ENCODE measurements at regions of chr1 and their contacts with region 1.

Region 1: DNA sequence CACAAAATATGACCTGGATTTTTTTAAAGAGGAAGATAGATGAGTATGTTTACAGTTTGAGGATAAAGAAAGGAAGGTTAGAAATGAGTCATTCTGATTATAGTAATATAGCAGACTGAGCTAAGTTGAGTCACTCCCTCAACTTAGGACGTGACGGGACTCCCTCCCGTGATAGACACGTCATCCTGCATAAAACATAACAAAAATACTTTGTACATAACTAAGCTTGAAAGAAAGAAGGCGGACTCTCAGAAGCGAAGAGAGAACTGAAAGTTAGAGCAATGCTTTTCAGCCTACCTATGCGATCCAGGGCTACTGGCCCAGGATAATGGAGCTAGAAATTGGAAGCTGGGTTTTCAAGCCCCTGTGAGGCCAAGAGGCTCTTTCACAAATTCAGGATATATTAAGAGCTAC is 53.0 kb upstream of the DESI2 start:
- DNase-seq: peak; percentile 96
- H3K4me3 ChIP-seq: peak overlapping the region in 2 of 3 experiments; percentile 12 to 63
- H3K27ac ChIP-seq: peak overlapping the region; percentile 92
- H3K4me1 ChIP-seq: peaks cover 15% of the 10 kb centered on the region
- H3K27me3 ChIP-seq: peaks cover 0 to 2% of the 10 kb centered on the region in 2 experiments
- CTCF ChIP-seq: no peak
- POLR2A ChIP-seq: no peak

Region 2: DNA sequence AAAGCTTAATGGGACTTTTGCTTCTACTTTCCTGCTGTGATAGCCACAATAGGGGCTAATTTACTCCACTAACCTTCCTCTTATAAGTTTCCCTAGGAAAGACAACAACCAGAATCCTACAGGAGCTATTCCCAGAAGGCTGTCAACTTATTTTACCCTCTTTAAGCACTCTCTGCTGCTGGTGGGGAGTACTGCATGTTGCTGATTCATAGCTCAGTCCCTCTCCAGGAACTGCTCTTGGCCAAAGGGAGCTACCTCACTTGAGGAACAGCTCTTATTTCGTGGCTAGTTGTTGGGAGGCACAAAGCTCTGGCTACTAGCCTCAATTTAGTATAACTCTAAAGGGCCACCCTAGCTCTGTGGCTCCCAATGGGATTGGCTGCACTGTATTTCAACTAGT is 185.4 kb before region 1 on chr1:
- CTCF ChIA-PET with region 1: no interaction called
- POLR2A ChIA-PET with region 1: no interaction called
- dilution Hi-C with region 1: no loop called
- intact Hi-C with region 1: no loop called
- DNase-seq: peak; percentile 64
- H3K4me3 ChIP-seq: no peak overlapping the region
- H3K27ac ChIP-seq: no peak overlapping the region
- H3K4me1 ChIP-seq: no peaks in the 10 kb centered on the region
- H3K27me3 ChIP-seq: no peaks in the 10 kb centered on the region
- CTCF ChIP-seq: peak; percentile 17 to 24
- POLR2A ChIP-seq: no peak

Region 3: DNA sequence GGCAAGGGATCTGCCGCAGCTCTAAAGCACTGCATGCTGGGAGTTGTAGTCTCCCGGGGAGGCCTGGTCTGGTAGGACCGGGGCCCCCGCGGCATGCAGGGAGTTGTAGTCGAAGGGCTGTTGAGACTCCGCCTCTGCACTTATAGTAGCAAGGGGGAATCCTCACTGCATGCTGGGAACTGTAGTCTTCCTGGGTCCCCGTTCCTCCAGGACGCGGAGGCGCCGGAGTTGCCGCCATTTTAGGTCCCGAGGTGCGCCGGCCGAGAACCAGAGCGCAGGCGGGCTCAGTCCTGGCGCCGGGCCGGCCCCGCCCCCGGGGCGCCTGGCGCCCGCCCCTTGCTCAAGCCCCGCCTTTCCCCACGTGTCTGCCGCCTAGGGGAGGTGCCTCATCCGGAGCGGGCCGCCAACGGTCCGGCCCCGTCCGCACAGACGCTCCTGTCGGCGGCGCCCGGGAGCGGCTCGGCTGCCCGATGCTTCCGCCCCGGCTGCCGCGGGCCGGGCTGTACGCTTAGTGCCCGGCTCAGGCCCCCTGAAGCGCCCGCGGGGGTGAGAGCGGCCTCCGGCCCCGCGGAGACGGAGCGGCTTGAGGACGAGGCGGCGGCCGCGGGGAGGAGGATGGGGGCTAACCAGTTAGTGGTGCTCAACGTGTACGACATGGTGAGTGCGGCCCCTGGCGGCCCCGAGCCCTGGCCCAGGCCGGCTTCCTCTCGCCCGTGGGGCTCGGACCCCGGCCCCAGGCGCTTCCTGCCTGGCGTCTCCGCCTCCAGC is 52.9 kb after region 1 on chr1 and contains the start of gene DESI2:
- CTCF ChIA-PET with region 1: interaction called, 15 read pairs
- POLR2A ChIA-PET with region 1: interaction called, 9 read pairs
- dilution Hi-C with region 1: no loop called
- intact Hi-C with region 1: loop called (anchors 1 kb)
- DNase-seq: peak; percentile 99
- H3K4me3 ChIP-seq: peak within 1 kb of the TSS; percentile 58 to 98 (median 90)
- H3K27ac ChIP-seq: peak within 1 kb of the TSS; percentile 83
- H3K4me1 ChIP-seq: peaks cover 16% of the 10 kb centered on the region
- H3K27me3 ChIP-seq: peaks cover 2 to 3% of the 10 kb centered on the region in 2 experiments
- CTCF ChIP-seq: peak; percentile 31 to 54
- POLR2A ChIP-seq: peak; percentile 96
- total RNA-seq, gene DESI2: 37.2 TPM in 2 replicates

Region 4: DNA sequence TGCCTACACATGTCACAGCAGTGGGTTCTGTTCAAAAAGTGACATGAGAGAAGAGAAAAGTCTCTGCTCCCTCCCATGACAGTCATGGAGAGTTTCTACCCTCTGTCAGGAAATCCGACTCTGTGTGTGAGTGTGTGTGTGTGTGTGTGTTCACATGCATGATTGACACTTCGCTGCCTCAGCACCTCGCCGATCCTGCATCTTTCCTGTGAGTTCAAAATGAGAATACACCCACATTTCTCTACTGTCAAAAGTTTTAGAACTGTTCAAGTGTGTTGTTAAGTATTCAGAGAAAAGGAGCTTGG is 189.3 kb after region 1 on chr1:
- CTCF ChIA-PET with region 1: interaction called, 295 read pairs
- POLR2A ChIA-PET with region 1: interaction called, 5 read pairs
- dilution Hi-C with region 1: no loop called
- intact Hi-C with region 1: no loop called
- DNase-seq: no peak
- H3K4me3 ChIP-seq: no peak overlapping the region
- H3K27ac ChIP-seq: no peak overlapping the region
- H3K4me1 ChIP-seq: no peaks in the 10 kb centered on the region
- H3K27me3 ChIP-seq: peaks cover 0 to 2% of the 10 kb centered on the region in 2 experiments
- CTCF ChIP-seq: no peak
- POLR2A ChIP-seq: no peak

Region 5: GRCh38 chr1:244864253-244865027 is 264.5 kb after region 1 on chr1 and contains the start of gene HNRNPU:
- CTCF ChIA-PET with region 1: no interaction called
- POLR2A ChIA-PET with region 1: no interaction called
- dilution Hi-C with region 1: no loop called
- intact Hi-C with region 1: loop called (anchors 2 kb)
- DNase-seq: peak; percentile 98
- H3K4me3 ChIP-seq: peak within 1 kb of the TSS; percentile 87 to 96 (median 94)
- H3K27ac ChIP-seq: peak within 1 kb of the TSS; percentile 89
- H3K4me1 ChIP-seq: peaks cover 30% of the 10 kb centered on the region
- H3K27me3 ChIP-seq: no peaks in the 10 kb centered on the region
- CTCF ChIP-seq: peak; percentile 26 to 33
- POLR2A ChIP-seq: peak; percentile 96
- total RNA-seq, gene HNRNPU: 398 and 417 TPM in 2 replicates